ENCODE measurements at regions of chr7 and their contacts with region 1.

Region 1: DNA sequence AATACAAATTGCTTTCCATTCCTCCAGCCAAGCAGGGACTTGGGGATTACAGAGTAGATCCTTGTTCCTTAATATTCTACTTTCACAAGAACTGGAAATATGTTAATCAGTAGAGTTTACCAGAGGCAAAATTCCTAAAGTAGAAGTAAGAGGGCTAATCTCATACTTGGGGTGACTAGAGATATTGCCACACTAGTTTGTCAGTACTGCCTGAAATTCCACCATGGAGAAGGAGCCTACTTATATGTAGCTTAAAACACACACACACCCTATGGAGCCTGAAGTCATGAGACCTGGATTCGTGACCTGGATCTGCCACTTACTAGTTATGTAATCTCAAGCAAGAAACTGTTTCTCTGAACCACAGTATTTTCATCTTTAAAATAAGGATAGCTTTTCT is 33.9 kb downstream of the STRIP2 start:
- DNase-seq: no peak
- ATAC-seq: no peak
- H3K4me3 Mint-ChIP-seq: no peak overlapping the region
- H3K27ac Mint-ChIP-seq: no peak overlapping the region
- H3K4me1 Mint-ChIP-seq: peaks cover 4% of the 10 kb centered on the region
- H3K27me3 Mint-ChIP-seq: no peaks in the 10 kb centered on the region
- CTCF ChIP-seq: no peak

Region 2: DNA sequence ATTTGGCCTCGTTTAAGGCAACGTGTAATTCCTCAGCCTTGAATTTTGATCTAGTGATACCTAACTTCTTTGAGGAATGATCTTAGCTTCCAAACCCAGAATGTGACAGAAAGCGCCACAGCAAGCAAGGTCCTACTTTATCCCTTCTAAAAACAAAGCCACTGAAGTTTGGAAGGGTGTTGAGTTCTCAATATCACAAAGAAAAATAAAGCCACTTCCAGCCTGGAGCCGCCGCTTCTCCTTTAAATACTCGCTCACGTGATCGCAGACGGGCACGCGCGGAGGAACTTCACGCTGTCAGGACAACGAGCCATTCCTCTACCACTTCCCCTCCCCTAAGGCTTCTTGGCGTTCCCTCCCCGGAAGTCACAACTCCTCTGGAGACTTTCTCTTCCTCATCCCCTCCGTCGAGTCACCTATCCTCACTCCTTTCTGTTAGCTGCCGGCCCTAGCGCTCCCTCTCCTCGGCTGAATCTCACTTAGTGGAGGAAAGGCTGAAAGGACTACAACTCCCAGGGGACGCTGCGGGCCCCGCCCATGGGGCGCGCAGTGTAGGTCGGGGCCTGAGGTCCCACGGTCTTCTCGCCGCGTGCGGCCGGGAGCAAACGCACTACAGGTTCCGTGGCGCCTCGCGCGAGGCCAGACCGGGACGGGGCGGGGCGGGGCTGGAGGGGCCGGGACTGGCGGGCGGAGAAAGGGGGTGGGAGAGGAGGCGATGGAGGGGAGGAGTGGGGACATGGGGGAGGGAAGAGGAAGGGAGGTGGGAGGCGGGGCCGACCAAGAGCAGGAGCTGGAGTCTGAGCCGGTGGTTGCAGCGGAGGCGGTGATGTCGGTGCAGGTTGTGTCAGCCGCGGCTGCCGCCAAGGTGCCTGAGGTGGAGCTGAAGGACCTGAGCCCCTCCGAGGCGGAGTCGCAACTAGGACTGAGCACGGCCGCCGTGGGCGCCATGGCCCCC is 243.6 kb before region 1 on chr7 and contains the start of gene AHCYL2:
- CTCF ChIA-PET with region 1: interaction called, 6 read pairs
- POLR2A ChIA-PET with region 1: no interaction called
- intact Hi-C with region 1: loop called (anchors 10 kb)
- DNase-seq: peak; percentile 98
- ATAC-seq: peak; percentile 93
- H3K4me3 Mint-ChIP-seq: peak within 1 kb of the TSS; percentile 79
- H3K27ac Mint-ChIP-seq: peak within 1 kb of the TSS; percentile 91
- H3K4me1 Mint-ChIP-seq: peaks cover 25% of the 10 kb centered on the region
- H3K27me3 Mint-ChIP-seq: no peaks in the 10 kb centered on the region
- CTCF ChIP-seq: no peak
- total RNA-seq, gene AHCYL2: 8.1 to 9.6 TPM

Region 3: GRCh38 chr7:129343099-129343700 is 124.9 kb before region 1 on chr7:
- CTCF ChIA-PET with region 1: interaction called, 39 read pairs
- POLR2A ChIA-PET with region 1: no interaction called
- intact Hi-C with region 1: no loop called
- DNase-seq: peak; percentile 16
- ATAC-seq: peak; percentile 50
- H3K4me3 Mint-ChIP-seq: no peak overlapping the region
- H3K27ac Mint-ChIP-seq: no peak overlapping the region
- H3K4me1 Mint-ChIP-seq: peaks cover 31% of the 10 kb centered on the region
- H3K27me3 Mint-ChIP-seq: no peaks in the 10 kb centered on the region
- CTCF ChIP-seq: peak; percentile 83

Region 4: DNA sequence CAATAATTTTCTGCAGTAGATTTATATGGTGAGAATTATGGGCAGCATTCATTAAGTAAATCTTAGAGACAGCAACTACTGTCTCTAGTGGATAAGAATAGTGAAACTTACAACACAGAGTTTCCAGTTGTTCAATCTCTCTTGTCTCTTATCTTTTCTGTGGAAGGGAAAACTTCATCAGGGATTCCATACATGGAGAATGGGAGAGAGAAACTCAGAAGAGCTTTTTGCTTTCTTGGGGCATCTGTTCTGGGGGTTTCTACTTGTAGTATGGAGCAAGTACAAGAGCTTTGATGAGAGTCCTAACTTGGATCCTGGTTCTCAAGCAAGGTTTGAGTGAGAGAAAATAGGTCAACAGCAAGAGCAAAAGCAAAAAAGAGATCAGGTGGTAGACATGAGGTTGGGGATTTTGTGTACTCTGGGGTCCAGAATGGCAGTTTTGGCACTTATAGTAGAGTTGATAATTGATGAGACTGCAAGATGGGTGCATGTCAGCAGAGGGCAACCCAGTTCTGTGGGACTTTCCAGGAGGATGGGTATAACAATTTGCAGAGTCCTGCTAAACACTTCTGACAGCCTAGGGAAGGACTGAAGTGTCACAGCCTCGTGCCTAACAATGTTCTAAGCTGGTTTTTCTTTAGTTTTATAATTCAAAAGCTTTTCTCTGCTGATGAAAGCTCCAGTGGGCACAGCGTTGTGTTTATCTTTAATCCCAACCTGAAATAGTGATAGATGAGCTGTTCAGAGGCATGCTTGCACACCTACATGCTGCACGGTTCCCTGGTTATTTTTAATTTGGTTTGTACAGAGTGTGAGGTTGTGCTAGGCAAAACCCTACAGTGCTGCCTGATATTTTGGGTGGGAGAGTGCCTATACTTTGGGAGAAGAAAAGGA is 65.9 kb before region 1 on chr7:
- CTCF ChIA-PET with region 1: interaction called, 20 read pairs
- POLR2A ChIA-PET with region 1: no interaction called
- intact Hi-C with region 1: loop called (anchors 2 kb)
- DNase-seq: peak; percentile 56
- ATAC-seq: peak; percentile 79
- H3K4me3 Mint-ChIP-seq: no peak overlapping the region
- H3K27ac Mint-ChIP-seq: no peak overlapping the region
- H3K4me1 Mint-ChIP-seq: peaks cover 5% of the 10 kb centered on the region
- H3K27me3 Mint-ChIP-seq: no peaks in the 10 kb centered on the region
- CTCF ChIP-seq: no peak

Region 5: GRCh38 chr7:129433847-129434674 is 34.0 kb before region 1 on chr7 and contains the start of gene STRIP2:
- CTCF ChIA-PET with region 1: interaction called, 16 read pairs
- POLR2A ChIA-PET with region 1: no interaction called
- intact Hi-C with region 1: no loop called
- DNase-seq: peak; percentile 95
- ATAC-seq: peak; percentile 89
- H3K4me3 Mint-ChIP-seq: peak within 1 kb of the TSS; percentile 75
- H3K27ac Mint-ChIP-seq: peak within 1 kb of the TSS; percentile 76
- H3K4me1 Mint-ChIP-seq: peaks cover 33% of the 10 kb centered on the region
- H3K27me3 Mint-ChIP-seq: peaks cover 24% of the 10 kb centered on the region
- CTCF ChIP-seq: peak; percentile 5
- total RNA-seq, gene STRIP2: 12.2 to 13.1 TPM

Measured in activated CD8-positive, alpha-beta T cell treated with anti-CD3 and anti-CD28 coated beads for 36 hours (primary cell).